Caco-2 (cell line): ENCODE measurements at regions of chr3 and their contacts with region 1.

Region 1: DNA sequence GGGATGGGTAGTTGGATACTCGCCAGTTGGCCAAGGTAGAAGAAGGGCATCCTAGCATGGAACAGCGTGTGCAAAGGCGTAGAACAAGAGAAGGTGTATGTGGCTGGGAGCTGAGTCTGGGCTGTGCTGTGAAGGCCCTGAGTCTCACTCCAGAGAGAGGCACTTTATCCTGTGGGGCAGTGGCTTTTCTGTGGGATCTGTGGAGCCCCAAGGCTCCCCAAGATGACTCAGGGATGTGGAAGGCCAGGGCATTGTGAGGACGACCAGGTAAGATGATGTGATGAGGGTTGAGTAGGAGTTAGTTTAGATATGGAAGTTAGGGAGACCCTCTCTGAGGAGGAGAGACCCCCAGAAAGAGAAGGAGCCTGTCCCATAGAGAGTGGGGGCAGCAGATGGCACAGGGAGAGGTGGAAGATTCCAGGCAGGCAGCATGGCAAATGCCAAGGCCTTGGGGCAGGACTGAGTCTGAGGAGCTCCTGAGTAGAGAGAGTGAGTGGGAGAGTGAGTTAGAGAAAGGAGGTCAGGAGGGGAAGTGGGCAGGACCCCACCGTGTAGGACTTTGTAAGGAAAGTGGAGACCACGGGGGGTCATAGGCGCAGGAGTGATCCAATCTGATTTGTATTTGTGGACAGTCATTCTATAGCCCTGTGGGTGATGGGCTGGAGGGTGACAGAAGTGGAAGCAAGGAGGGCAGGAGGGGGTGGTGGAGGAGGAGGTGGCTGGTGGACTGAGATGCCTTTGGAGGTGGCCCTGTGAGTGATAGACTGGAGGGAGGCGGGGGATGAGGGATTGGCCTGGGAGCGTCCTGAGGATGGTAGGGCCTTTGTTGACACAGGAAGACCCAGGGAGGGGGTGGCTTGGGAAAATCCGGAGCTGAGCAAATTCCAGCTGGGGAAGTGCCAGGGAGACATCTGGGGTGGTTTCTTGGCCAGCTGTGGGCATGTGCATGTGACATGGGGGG is 50.3 kb downstream of the FBLN2 start:
- DNase-seq: no peak
- H3K4me3 ChIP-seq: no peak overlapping the region
- H3K4me3 Mint-ChIP-seq: no peak overlapping the region
- H3K27ac Mint-ChIP-seq: peak overlapping the region; percentile 39
- H3K4me1 ChIP-seq: peaks cover 27% of the 10 kb centered on the region
- H3K4me1 Mint-ChIP-seq: peaks cover 33% of the 10 kb centered on the region
- H3K27me3 ChIP-seq: no peaks in the 10 kb centered on the region
- H3K27me3 Mint-ChIP-seq: no peaks in the 10 kb centered on the region
- CTCF ChIP-seq: no peak

Region 2: DNA sequence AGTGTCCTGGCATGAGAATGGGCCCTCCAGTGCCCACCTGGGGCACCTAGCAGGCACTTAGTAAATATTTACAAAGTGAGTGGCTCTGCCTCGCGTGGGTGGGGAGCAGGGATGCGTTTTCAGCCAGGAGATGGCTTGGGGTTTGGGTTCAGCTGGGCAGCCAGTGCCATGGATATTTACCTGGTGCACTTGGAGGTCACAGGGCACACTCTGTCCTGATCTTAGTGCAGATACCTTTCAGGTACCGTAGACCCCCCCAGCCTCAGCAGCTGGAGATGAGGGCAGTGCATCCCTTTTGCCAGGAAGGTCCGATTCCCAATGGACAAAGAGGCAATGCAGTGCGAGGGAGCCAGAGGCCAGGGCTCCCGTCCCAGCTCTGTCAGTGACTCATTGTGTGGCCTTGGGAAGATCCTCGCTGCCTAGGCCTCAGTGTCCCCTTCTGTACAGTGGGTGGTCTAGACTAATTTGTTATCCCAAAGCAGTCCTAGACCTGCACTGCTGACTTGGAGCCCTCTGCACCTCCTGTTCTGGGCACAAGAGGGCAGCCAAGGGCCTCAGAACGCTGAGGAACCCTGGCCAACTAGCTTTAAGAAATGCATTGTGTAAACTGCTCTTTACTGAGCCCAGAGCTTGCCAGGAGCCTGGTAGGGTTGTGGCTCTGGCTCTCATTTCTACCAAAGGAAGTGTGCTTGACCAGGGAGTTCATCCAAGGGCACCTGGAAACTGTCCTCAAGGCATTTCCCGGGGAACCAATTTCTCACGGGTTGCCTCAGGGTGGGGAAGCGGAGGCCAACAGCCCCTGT is 103.1 kb before region 1 on chr3:
- CTCF ChIA-PET with region 1: interaction called, 11 read pairs
- POLR2A ChIA-PET with region 1: no interaction called
- intact Hi-C with region 1: no loop called
- DNase-seq: peak; percentile 65 to 83
- H3K4me3 ChIP-seq: no peak overlapping the region
- H3K4me3 Mint-ChIP-seq: no peak overlapping the region
- H3K27ac Mint-ChIP-seq: no peak overlapping the region
- H3K4me1 ChIP-seq: no peaks in the 10 kb centered on the region
- H3K4me1 Mint-ChIP-seq: no peaks in the 10 kb centered on the region
- H3K27me3 ChIP-seq: no peaks in the 10 kb centered on the region
- H3K27me3 Mint-ChIP-seq: no peaks in the 10 kb centered on the region
- CTCF ChIP-seq: peak; percentile 93 to 96

Region 3: GRCh38 chr3:13548696-13549622 is 50.2 kb before region 1 on chr3 and contains the start of gene FBLN2:
- CTCF ChIA-PET with region 1: no interaction called
- POLR2A ChIA-PET with region 1: no interaction called
- intact Hi-C with region 1: loop called (anchors 5 kb)
- DNase-seq: peak; percentile 55 to 87
- H3K4me3 ChIP-seq: peak within 1 kb of the TSS; percentile 46
- H3K4me3 Mint-ChIP-seq: peak within 1 kb of the TSS; percentile 76
- H3K27ac Mint-ChIP-seq: peak within 1 kb of the TSS; percentile 73
- H3K4me1 ChIP-seq: peaks cover 24% of the 10 kb centered on the region
- H3K4me1 Mint-ChIP-seq: peaks cover 32% of the 10 kb centered on the region
- H3K27me3 ChIP-seq: no peaks in the 10 kb centered on the region
- H3K27me3 Mint-ChIP-seq: no peaks in the 10 kb centered on the region
- CTCF ChIP-seq: no peak
- total RNA-seq, gene FBLN2: 36.7 and 48.8 TPM in 2 replicates

Region 4: GRCh38 chr3:13587442-13587841 is 11.8 kb before region 1 on chr3:
- CTCF ChIA-PET with region 1: interaction called, 3 read pairs
- POLR2A ChIA-PET with region 1: no interaction called
- intact Hi-C with region 1: loop called (anchors 1 kb)
- DNase-seq: peak in 1 of 2 experiments; percentile 34
- H3K4me3 ChIP-seq: no peak overlapping the region
- H3K4me3 Mint-ChIP-seq: peak overlapping the region; percentile 36
- H3K27ac Mint-ChIP-seq: no peak overlapping the region
- H3K4me1 ChIP-seq: peaks cover 28% of the 10 kb centered on the region
- H3K4me1 Mint-ChIP-seq: peaks cover 26% of the 10 kb centered on the region
- H3K27me3 ChIP-seq: no peaks in the 10 kb centered on the region
- H3K27me3 Mint-ChIP-seq: no peaks in the 10 kb centered on the region
- CTCF ChIP-seq: no peak